Activated naive CD4-positive, alpha-beta T cell treated with anti-CD3 and anti-CD28 coated beads for 36 hours (primary cell): ENCODE measurements at regions of chr14 and their contacts with region 1.

Region 1: GRCh38 chr14:35808076-35808652 is 931 bp downstream of the RALGAPA1 start:
- DNase-seq: peak; percentile 61
- H3K4me3 Mint-ChIP-seq: peak overlapping the region; percentile 98
- H3K27ac Mint-ChIP-seq: peak overlapping the region; percentile 86
- H3K4me1 Mint-ChIP-seq: peaks cover 28% of the 10 kb centered on the region
- H3K27me3 Mint-ChIP-seq: no peaks in the 10 kb centered on the region

Region 2: GRCh38 chr14:35331605-35332516 is 476.3 kb before region 1 on chr14:
- CTCF ChIA-PET with region 1: no interaction called
- intact Hi-C with region 1: loop called (anchors 1 kb)
- DNase-seq: no peak
- H3K4me3 Mint-ChIP-seq: no peak overlapping the region
- H3K27ac Mint-ChIP-seq: peak overlapping the region; percentile 94
- H3K4me1 Mint-ChIP-seq: peaks cover 32% of the 10 kb centered on the region
- H3K27me3 Mint-ChIP-seq: no peaks in the 10 kb centered on the region

Region 3: DNA sequence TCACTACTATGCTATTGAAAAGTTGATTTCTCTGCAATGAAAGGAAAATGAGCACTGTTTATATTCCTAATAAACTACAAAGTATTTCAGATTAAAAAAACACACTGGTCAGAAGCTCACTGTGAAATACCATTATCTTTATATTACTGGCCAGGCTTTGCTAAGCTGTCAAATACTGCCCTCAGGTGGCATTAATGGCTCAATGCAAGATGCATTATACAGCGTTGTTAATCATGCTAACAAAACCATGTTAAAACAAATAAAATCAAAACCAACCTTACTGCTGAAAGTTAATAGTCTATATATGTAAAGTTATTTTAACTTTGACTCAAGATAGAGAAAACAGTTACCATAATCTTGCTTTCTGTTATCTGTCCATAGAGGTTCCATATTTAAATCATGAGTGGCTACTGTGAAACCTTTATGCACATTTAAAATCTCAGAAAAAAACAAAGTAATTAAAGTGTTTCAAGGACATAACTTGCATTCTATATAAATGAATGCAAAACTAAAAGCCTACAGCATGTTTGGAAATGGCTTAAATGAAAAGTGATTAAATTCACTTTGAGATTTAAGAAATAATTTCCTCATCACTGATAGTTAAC is 120.7 kb before region 1 on chr14:
- CTCF ChIA-PET with region 1: interaction called, 3 read pairs
- intact Hi-C with region 1: loop called (anchors 1 kb)
- DNase-seq: peak; percentile 63
- H3K4me3 Mint-ChIP-seq: no peak overlapping the region
- H3K27ac Mint-ChIP-seq: no peak overlapping the region
- H3K4me1 Mint-ChIP-seq: peaks cover 16% of the 10 kb centered on the region
- H3K27me3 Mint-ChIP-seq: no peaks in the 10 kb centered on the region

Region 4: GRCh38 chr14:35786856-35787255 is 21.3 kb before region 1 on chr14:
- CTCF ChIA-PET with region 1: interaction called, 3 read pairs
- intact Hi-C with region 1: loop called (anchors 1 kb)
- DNase-seq: peak; percentile 17
- H3K4me3 Mint-ChIP-seq: no peak overlapping the region
- H3K27ac Mint-ChIP-seq: no peak overlapping the region
- H3K4me1 Mint-ChIP-seq: peaks cover 38% of the 10 kb centered on the region
- H3K27me3 Mint-ChIP-seq: no peaks in the 10 kb centered on the region

Region 5: DNA sequence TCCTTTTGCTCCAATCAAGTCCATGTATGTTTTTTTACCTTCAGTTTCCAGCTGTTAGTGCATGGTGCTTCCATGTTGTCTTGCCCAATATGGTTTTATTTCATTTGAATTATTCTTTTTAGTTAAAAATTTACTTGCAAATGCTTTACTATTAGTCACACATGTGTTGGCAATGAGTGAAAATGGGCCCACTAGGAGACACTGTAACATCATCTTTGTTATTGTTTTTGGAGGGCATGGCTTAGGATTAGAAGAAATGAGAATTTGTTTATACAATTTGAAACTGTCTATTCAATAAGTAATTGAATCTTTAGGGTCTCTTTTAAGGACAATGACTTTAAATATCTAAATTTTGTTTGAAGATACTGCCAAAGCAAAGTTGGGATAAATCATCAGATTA is 151.7 kb after region 1 on chr14:
- CTCF ChIA-PET with region 1: no interaction called
- intact Hi-C with region 1: no loop called
- DNase-seq: no peak
- H3K4me3 Mint-ChIP-seq: no peak overlapping the region
- H3K27ac Mint-ChIP-seq: no peak overlapping the region
- H3K4me1 Mint-ChIP-seq: no peaks in the 10 kb centered on the region
- H3K27me3 Mint-ChIP-seq: no peaks in the 10 kb centered on the region

Region 6: GRCh38 chr14:36096090-36096489 is 287.9 kb after region 1 on chr14:
- CTCF ChIA-PET with region 1: no interaction called
- intact Hi-C with region 1: no loop called
- DNase-seq: no peak
- H3K4me3 Mint-ChIP-seq: no peak overlapping the region
- H3K27ac Mint-ChIP-seq: no peak overlapping the region
- H3K4me1 Mint-ChIP-seq: no peaks in the 10 kb centered on the region
- H3K27me3 Mint-ChIP-seq: peaks cover 13% of the 10 kb centered on the region